ENCODE measurements at regions of chr10 and their contacts with region 1.

Region 1: GRCh38 chr10:11058965-11059364 is 41.3 kb downstream of the CELF2 start:
- DNase-seq: no peak
- ATAC-seq: no peak
- H3K4me3 Mint-ChIP-seq: no peak overlapping the region
- H3K27ac Mint-ChIP-seq: no peak overlapping the region
- H3K4me1 Mint-ChIP-seq: no peaks in the 10 kb centered on the region
- H3K27me3 Mint-ChIP-seq: peaks cover 20% of the 10 kb centered on the region
- CTCF ChIP-seq: no peak

Region 2: GRCh38 chr10:10665750-10666149 is 393.2 kb before region 1 on chr10:
- CTCF ChIA-PET with region 1: no interaction called
- POLR2A ChIA-PET with region 1: no interaction called
- intact Hi-C with region 1: no loop called
- DNase-seq: no peak
- ATAC-seq: no peak
- H3K4me3 Mint-ChIP-seq: no peak overlapping the region
- H3K27ac Mint-ChIP-seq: no peak overlapping the region
- H3K4me1 Mint-ChIP-seq: no peaks in the 10 kb centered on the region
- H3K27me3 Mint-ChIP-seq: peaks cover 2% of the 10 kb centered on the region
- CTCF ChIP-seq: no peak

Region 3: GRCh38 chr10:12670004-12670403 is 1611.0 kb after region 1 on chr10:
- CTCF ChIA-PET with region 1: no interaction called
- POLR2A ChIA-PET with region 1: no interaction called
- intact Hi-C with region 1: loop called (anchors 10 kb)
- DNase-seq: no peak
- ATAC-seq: no peak
- H3K4me3 Mint-ChIP-seq: no peak overlapping the region
- H3K27ac Mint-ChIP-seq: no peak overlapping the region
- H3K4me1 Mint-ChIP-seq: no peaks in the 10 kb centered on the region
- H3K27me3 Mint-ChIP-seq: no peaks in the 10 kb centered on the region
- CTCF ChIP-seq: no peak